OCI-LY7 (cell line): ENCODE measurements at regions of chr17 and their contacts with region 1.

Region 1: DNA sequence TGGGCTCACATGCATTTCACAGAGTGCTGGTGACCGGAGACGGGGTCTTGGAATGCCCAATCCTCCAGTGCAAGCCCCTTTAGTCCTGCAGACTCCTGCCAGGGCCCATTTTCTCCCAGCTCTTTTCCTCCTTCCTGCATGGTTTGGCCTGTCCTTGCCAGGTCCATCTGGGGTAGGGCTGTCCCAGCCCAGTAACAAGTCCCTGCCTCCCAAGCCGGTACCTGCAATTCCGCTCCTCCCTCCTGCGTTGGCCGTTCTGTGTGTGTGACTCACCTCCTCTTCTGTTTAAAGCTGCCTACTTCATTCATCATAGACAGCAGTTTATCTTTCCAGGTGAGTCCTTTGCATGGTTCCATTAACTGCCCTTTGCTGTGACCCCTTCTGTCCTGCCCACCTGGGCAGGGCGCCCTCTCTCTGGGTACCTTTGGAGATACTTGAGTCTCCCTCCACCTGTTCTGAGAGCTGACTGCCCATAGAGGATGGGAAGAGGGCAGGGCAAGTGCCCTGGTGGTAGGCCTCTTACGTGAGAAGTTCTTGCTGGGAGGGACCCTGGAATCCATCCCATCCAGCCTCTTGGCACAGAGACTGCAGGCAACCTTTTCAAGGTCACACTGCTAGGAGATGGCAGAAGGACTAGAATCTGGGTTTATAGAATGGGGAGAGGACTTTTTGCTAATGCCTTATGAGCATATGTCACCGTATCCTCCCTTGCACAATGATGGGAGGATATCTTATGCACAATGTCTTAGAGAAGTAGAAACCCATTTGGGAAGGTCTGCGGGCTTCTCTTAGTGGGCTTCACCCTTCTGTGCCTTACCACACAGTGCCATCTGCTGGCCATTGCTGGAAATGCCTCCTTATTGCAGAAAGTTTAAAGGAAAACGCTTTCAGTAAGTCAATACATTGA is 29.7 kb upstream of the LGALS9 start:
- DNase-seq: peak; percentile 72
- H3K4me3 ChIP-seq: no peak overlapping the region
- H3K27ac ChIP-seq: no peak overlapping the region
- H3K4me1 ChIP-seq: no peaks in the 10 kb centered on the region
- CTCF ChIP-seq: peak; percentile 95

Region 2: GRCh38 chr17:27236717-27237315 is 364.5 kb before region 1 on chr17:
- CTCF ChIA-PET with region 1: no interaction called
- POLR2A ChIA-PET with region 1: interaction called, 7 read pairs
- intact Hi-C with region 1: loop called (anchors 1 kb)
- DNase-seq: peak; percentile 72
- H3K4me3 ChIP-seq: no peak overlapping the region
- H3K27ac ChIP-seq: no peak overlapping the region
- H3K4me1 ChIP-seq: peaks cover 6% of the 10 kb centered on the region
- CTCF ChIP-seq: peak; percentile 97

Region 3: DNA sequence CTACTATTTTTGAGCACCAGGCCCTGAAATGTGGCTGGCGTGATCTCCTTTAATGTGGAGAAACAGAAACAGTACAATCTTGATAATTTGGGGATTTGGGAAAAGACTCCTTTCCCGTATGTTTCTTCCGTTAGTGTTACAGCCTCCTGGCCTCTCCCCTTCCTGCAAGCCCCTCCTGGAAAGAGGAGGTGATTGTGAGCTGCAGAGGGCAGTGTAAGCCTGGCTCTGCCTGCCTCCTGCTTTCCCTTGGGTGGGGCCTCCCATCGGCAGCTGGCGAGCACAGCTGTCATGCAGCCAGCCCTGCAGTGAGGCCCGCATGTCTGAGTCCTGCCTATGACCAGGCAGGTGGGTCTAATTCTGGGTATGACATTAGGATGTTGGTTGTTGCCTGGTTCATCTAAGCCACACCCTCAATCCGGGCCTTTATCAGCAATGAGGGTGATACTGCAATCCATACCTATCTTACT is 356.1 kb before region 1 on chr17:
- CTCF ChIA-PET with region 1: no interaction called
- POLR2A ChIA-PET with region 1: no interaction called
- intact Hi-C with region 1: loop called (anchors 2 kb)
- DNase-seq: peak; percentile 77
- H3K4me3 ChIP-seq: no peak overlapping the region
- H3K27ac ChIP-seq: no peak overlapping the region
- H3K4me1 ChIP-seq: peaks cover 14% of the 10 kb centered on the region
- CTCF ChIP-seq: peak; percentile 79

Region 4: GRCh38 chr17:27353461-27354050 is 247.8 kb before region 1 on chr17:
- CTCF ChIA-PET with region 1: no interaction called
- POLR2A ChIA-PET with region 1: no interaction called
- intact Hi-C with region 1: loop called (anchors 1 kb)
- DNase-seq: peak; percentile 85
- H3K4me3 ChIP-seq: peak overlapping the region; percentile 84
- H3K27ac ChIP-seq: peak overlapping the region; percentile 8
- H3K4me1 ChIP-seq: peaks cover 17% of the 10 kb centered on the region
- CTCF ChIP-seq: peak; percentile 88

Region 5: GRCh38 chr17:27455914-27456680 is 145.2 kb before region 1 on chr17 and contains the start of gene KSR1:
- CTCF ChIA-PET with region 1: no interaction called
- POLR2A ChIA-PET with region 1: no interaction called
- intact Hi-C with region 1: loop called (anchors 5 kb)
- DNase-seq: peak; percentile 82
- H3K4me3 ChIP-seq: peak within 1 kb of the TSS; percentile 82
- H3K27ac ChIP-seq: no peak within 1 kb of the TSS
- H3K4me1 ChIP-seq: peaks cover 6% of the 10 kb centered on the region
- CTCF ChIP-seq: peak; percentile 77
- total RNA-seq, gene KSR1: 2.0 and 2.2 TPM in 2 replicates

Region 6: DNA sequence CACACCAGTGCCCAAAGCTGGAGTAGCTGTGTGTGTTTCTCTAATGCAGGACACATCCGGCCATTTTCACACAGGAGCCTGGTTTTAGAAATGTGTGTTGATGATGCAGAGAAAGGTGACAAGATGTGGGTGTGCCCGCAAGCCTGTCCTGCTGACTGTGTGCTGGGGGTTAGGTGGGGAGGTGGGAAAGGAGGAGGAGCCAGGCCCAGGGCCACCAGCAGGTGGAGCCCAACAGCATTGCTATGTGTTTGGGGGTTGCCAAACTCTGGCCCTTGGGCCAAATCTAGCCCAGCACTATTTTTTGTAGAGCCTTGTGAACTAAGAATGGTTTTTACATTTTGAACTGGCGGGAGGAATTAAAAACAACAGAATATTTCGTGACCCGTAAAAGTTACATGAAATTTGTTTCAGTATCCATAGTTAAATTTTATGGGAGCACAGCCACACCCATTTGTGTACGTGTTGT is 32.0 kb before region 1 on chr17:
- CTCF ChIA-PET with region 1: interaction called, 3 read pairs
- POLR2A ChIA-PET with region 1: no interaction called
- intact Hi-C with region 1: loop called (anchors 1 kb)
- DNase-seq: peak; percentile 51
- H3K4me3 ChIP-seq: no peak overlapping the region
- H3K27ac ChIP-seq: no peak overlapping the region
- H3K4me1 ChIP-seq: no peaks in the 10 kb centered on the region
- CTCF ChIP-seq: peak; percentile 88

Region 7: DNA sequence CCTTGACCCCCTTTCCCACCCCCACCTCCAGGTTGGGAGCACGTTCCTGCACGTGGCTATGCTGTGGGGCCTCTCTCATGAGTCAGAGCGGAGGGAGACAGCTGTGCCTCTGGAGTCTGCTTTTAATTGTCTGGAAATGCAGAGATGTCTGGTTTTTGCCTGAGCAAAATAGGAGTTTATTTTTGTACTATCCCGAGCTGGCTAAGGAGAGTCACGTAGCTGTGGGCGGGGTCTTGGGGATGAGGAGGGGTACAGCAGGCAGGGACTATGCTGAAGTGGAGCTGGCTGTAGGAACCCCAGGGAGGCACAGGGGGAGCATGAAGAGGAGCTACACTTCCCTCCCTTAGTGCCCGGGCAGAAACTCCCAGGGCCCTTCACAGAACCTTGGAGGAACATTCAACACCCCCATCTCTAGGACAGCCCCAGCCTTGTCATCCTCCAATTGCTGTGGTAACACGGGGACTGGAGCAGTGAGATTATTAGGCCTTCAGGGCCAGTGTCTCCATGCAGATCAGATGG is 15.1 kb before region 1 on chr17:
- CTCF ChIA-PET with region 1: no interaction called
- POLR2A ChIA-PET with region 1: no interaction called
- intact Hi-C with region 1: no loop called
- DNase-seq: no peak
- H3K4me3 ChIP-seq: no peak overlapping the region
- H3K27ac ChIP-seq: no peak overlapping the region
- H3K4me1 ChIP-seq: no peaks in the 10 kb centered on the region
- CTCF ChIP-seq: no peak

Region 8: GRCh38 chr17:27654654-27655524 is 53.6 kb after region 1 on chr17:
- CTCF ChIA-PET with region 1: no interaction called
- POLR2A ChIA-PET with region 1: no interaction called
- intact Hi-C with region 1: loop called (anchors 1 kb)
- DNase-seq: peak; percentile 88
- H3K4me3 ChIP-seq: no peak overlapping the region
- H3K27ac ChIP-seq: no peak overlapping the region
- H3K4me1 ChIP-seq: peaks cover 4% of the 10 kb centered on the region
- CTCF ChIP-seq: peak; percentile 99

Region 9: GRCh38 chr17:28071891-28072606 is 470.7 kb after region 1 on chr17:
- CTCF ChIA-PET with region 1: no interaction called
- POLR2A ChIA-PET with region 1: no interaction called
- intact Hi-C with region 1: no loop called
- DNase-seq: peak; percentile 65
- H3K4me3 ChIP-seq: no peak overlapping the region
- H3K27ac ChIP-seq: peak overlapping the region; percentile 30
- H3K4me1 ChIP-seq: peaks cover 53% of the 10 kb centered on the region
- CTCF ChIP-seq: no peak